Mammary epithelial cell (primary cell): ENCODE measurements at regions of chr4 and their contacts with region 1.

Region 1: DNA sequence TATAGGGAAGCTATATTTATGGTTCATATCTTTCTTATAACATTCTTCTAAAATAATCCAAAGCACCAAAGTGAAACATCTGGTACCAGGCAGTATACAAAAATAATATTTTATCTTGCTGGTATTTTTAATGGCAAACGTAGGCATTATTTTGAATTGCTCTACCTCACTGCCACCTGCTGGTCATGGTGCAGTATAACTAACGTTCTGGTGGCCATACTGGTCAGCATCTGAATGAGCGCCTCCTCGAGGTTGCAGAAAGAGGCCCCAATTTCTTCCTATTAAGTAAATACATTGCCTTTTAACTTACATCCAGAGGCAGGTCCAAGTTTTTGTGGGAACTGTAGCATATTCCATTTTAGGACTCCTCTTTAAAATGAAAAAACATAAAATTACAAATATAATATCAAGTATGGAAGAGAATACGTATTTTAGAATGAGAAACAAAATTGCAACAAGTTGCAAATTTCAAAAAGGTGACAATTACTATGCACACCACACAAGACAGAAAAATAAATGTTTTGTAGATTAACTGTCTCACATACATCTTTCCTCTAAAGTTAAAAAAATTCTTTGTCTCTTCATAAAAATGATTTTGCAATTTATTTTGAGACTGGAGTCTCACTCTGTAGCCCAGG is 22.9 kb upstream of the CWH43 start:
- DNase-seq: peak; percentile 71
- H3K4me3 ChIP-seq: no peak overlapping the region
- H3K27ac ChIP-seq: no peak overlapping the region
- H3K4me1 ChIP-seq: peaks cover 29% of the 10 kb centered on the region
- H3K27me3 ChIP-seq: no peaks in the 10 kb centered on the region
- CTCF ChIP-seq: peak; percentile 98 to 100

Region 2: GRCh38 chr4:48340965-48341775 is 622.0 kb before region 1 on chr4 and contains the start of gene SLAIN2:
- CTCF ChIA-PET with region 1: no interaction called
- dilution Hi-C with region 1: no loop called
- in situ Hi-C with region 1: no loop called
- intact Hi-C with region 1: loop called (anchors 10 kb)
- DNase-seq: peak; percentile 95
- H3K4me3 ChIP-seq: peak within 1 kb of the TSS; percentile 75 to 96 (median 88)
- H3K27ac ChIP-seq: peak within 1 kb of the TSS; percentile 84
- H3K4me1 ChIP-seq: peaks cover 56% of the 10 kb centered on the region
- H3K27me3 ChIP-seq: no peaks in the 10 kb centered on the region
- CTCF ChIP-seq: peak in 1 of 2 donors; percentile 37
- total RNA-seq, gene SLAIN2: 79.9 to 95.9 TPM

Region 3: GRCh38 chr4:48681856-48682255 is 281.3 kb before region 1 on chr4:
- CTCF ChIA-PET with region 1: no interaction called
- dilution Hi-C with region 1: no loop called
- in situ Hi-C with region 1: no loop called
- intact Hi-C with region 1: loop called (anchors 5 kb)
- DNase-seq: peak; percentile 50
- H3K4me3 ChIP-seq: no peak overlapping the region
- H3K27ac ChIP-seq: no peak overlapping the region
- H3K4me1 ChIP-seq: no peaks in the 10 kb centered on the region
- H3K27me3 ChIP-seq: no peaks in the 10 kb centered on the region
- CTCF ChIP-seq: peak; percentile 38 to 69

Region 4: GRCh38 chr4:48779998-48780742 is 183.0 kb before region 1 on chr4 and contains the start of gene FRYL:
- CTCF ChIA-PET with region 1: no interaction called
- dilution Hi-C with region 1: no loop called
- in situ Hi-C with region 1: loop called in 1 of 2 experiments (anchors 25 kb)
- intact Hi-C with region 1: loop called (anchors 1 kb)
- DNase-seq: peak; percentile 100
- H3K4me3 ChIP-seq: peak within 1 kb of the TSS; percentile 77 to 81 (median 79)
- H3K27ac ChIP-seq: peak within 1 kb of the TSS; percentile 87
- H3K4me1 ChIP-seq: peaks cover 23% of the 10 kb centered on the region
- H3K27me3 ChIP-seq: no peaks in the 10 kb centered on the region
- CTCF ChIP-seq: no peak
- total RNA-seq, gene FRYL: 74.7 to 75.7 TPM

Region 5: GRCh38 chr4:48906206-48907173 is 56.7 kb before region 1 on chr4 and contains the start of gene OCIAD2:
- CTCF ChIA-PET with region 1: interaction called, 3 read pairs
- dilution Hi-C with region 1: no loop called
- in situ Hi-C with region 1: loop called in 1 of 2 experiments (anchors 10 kb)
- intact Hi-C with region 1: no loop called
- DNase-seq: peak; percentile 57
- H3K4me3 ChIP-seq: peak within 1 kb of the TSS; percentile 68 to 80 (median 74)
- H3K27ac ChIP-seq: peak within 1 kb of the TSS; percentile 54
- H3K4me1 ChIP-seq: peaks cover 39% of the 10 kb centered on the region
- H3K27me3 ChIP-seq: no peaks in the 10 kb centered on the region
- CTCF ChIP-seq: peak in 1 of 2 donors; percentile 21
- total RNA-seq, gene OCIAD2: 19.2 to 138 TPM

Region 6: DNA sequence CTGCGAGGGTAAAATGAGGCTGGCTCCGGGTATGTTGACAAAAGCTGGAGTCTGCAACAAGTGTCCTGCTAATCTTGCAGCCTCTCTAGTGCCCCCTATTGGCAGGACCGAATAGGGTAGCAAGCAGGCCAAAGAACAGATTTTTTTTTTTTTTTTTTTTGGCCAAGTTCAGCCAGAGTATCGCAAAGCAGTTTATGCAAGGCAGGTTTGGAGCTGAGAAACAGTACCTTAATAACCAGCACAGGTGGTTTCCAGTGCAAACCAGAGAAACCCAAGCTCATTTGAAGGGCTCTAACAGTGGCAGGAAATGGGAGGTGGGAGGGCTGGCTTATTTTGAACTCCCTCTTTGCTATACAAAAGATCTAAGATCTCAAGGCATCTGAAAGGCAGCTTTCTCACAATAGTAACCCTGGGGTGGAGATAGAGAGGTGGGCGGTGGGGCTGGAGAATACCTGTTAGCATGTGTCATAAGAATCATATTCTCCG is 18.4 kb before region 1 on chr4:
- CTCF ChIA-PET with region 1: interaction called, 11 read pairs
- dilution Hi-C with region 1: no loop called
- in situ Hi-C with region 1: no loop called
- intact Hi-C with region 1: loop called (anchors 1 kb)
- DNase-seq: peak; percentile 61
- H3K4me3 ChIP-seq: peak overlapping the region in 2 of 3 experiments; percentile 3 to 15
- H3K27ac ChIP-seq: peak overlapping the region; percentile 90
- H3K4me1 ChIP-seq: peaks cover 36% of the 10 kb centered on the region
- H3K27me3 ChIP-seq: no peaks in the 10 kb centered on the region
- CTCF ChIP-seq: peak; percentile 76 to 83

Region 7: GRCh38 chr4:48974979-48975640 is 11.9 kb after region 1 on chr4:
- CTCF ChIA-PET with region 1: no interaction called
- dilution Hi-C with region 1: no loop called
- in situ Hi-C with region 1: no loop called
- intact Hi-C with region 1: no loop called
- DNase-seq: no peak
- H3K4me3 ChIP-seq: no peak overlapping the region
- H3K27ac ChIP-seq: no peak overlapping the region
- H3K4me1 ChIP-seq: peaks cover 15% of the 10 kb centered on the region
- H3K27me3 ChIP-seq: no peaks in the 10 kb centered on the region
- CTCF ChIP-seq: no peak

Region 8: DNA sequence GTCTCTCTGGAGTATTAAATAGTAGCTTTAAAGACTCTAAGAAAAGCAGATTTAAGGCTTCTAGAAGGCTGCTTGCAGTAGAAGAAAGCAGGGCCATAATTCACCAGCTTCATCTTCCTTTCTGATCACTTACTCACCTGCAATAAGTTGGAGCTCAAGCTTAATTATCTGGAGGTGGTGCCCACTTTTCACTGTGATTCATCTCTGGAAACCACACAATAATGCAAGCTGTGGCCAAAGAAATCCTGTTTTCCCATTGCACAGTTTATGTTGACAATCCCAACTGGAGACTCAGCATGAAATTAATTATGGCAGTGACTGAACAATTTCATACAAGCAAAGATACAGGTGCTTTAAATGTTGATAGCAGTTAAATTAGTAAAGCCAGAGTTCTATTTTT is 37.6 kb after region 1 on chr4:
- CTCF ChIA-PET with region 1: no interaction called
- dilution Hi-C with region 1: no loop called
- in situ Hi-C with region 1: no loop called
- intact Hi-C with region 1: no loop called
- DNase-seq: peak; percentile 88
- H3K4me3 ChIP-seq: no peak overlapping the region
- H3K27ac ChIP-seq: no peak overlapping the region
- H3K4me1 ChIP-seq: no peaks in the 10 kb centered on the region
- H3K27me3 ChIP-seq: no peaks in the 10 kb centered on the region
- CTCF ChIP-seq: no peak